ENCODE measurements at regions of chr1 and their contacts with region 1.

Region 1: GRCh38 chr1:11822096-11822495 is 16.1 kb downstream of the CLCN6 start:
- DNase-seq: no peak
- H3K4me3 ChIP-seq: no peak overlapping the region
- CTCF ChIP-seq: no peak

Region 2: GRCh38 chr1:11600836-11601235 is 221.3 kb before region 1 on chr1:
- CTCF ChIA-PET with region 1: no interaction called
- POLR2A ChIA-PET with region 1: no interaction called
- DNase-seq: no peak
- H3K4me3 ChIP-seq: no peak overlapping the region
- CTCF ChIP-seq: no peak

Region 3: DNA sequence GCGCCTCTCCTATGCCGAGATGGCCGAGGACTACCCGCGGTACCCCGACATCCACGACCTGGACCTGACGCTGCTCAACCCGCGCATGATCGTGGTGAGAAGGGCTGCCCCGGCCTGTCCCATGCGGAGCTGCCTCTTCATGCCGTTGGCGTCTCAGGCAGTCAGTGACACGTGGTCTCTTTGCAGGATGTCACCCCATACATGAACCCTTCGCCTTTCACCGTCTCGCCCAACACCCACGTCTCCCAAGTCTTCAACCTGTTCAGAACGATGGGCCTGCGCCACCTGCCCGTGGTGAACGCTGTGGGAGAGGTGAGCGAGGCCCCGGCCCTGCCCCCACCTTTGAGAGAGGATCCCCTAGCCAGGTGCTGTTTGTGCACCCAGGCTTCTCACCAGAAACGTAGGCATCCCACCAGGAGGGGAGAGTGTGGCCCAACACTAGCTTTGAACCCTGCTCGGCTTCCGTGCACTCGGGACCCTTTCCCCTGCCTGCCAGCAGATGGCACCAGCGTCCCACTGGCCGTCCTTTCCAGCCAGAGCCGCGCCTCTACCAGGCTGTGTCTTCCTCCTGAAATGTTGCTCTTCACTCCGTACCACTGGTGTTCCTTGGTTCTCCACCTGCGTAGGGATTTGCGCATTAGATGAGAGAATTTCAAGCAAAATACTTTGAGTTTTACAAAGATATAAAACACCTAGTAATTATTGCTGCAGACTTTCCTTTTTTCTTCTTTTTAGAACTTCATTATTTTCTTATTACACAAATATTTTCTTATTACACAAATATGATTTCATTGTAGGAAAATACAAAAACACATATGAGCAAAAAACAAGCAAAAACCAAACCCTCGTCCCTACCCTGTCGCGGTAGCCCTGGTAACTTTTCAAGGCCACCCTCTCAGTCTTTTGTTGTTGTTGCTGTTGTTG is 16.5 kb after region 1 on chr1:
- CTCF ChIA-PET with region 1: interaction called, 86 read pairs
- POLR2A ChIA-PET with region 1: interaction called, 4 read pairs
- DNase-seq: no peak
- H3K4me3 ChIP-seq: no peak overlapping the region
- CTCF ChIP-seq: peak; percentile 99

Measured in AG04449 (cell line).